ENCODE measurements at regions of chr9 and their contacts with region 1.

Region 1: GRCh38 chr9:129383561-129384416 is 205.7 kb upstream of the IER5L start:
- DNase-seq: peak; percentile 92 to 93 (median 92)
- H3K4me3 ChIP-seq: peak overlapping the region; percentile 41 to 79 (median 59)
- H3K4me3 Mint-ChIP-seq: peak overlapping the region; percentile 76 to 88
- H3K27ac ChIP-seq: peak overlapping the region; percentile 91 to 96
- H3K27ac Mint-ChIP-seq: peak overlapping the region; percentile 97 to 99 (median 97)
- H3K4me1 ChIP-seq: peaks cover 26 to 38% of the 10 kb centered on the region in 2 donors
- H3K4me1 Mint-ChIP-seq: peaks cover 35% of the 10 kb centered on the region
- H3K27me3 ChIP-seq: no peaks in the 10 kb centered on the region
- H3K27me3 Mint-ChIP-seq: peaks cover 2% of the 10 kb centered on the region in 3 donors
- CTCF ChIP-seq: peak; percentile 26

Region 2: GRCh38 chr9:129317179-129318011 is 66.4 kb before region 1 on chr9:
- intact Hi-C with region 1: no loop called
- DNase-seq: peak; percentile 34 to 50 (median 40)
- H3K4me3 ChIP-seq: no peak overlapping the region
- H3K4me3 Mint-ChIP-seq: no peak overlapping the region
- H3K27ac ChIP-seq: no peak overlapping the region
- H3K27ac Mint-ChIP-seq: peak overlapping the region in 2 of 7 donors; percentile 11 to 72
- H3K4me1 ChIP-seq: peaks cover 34 to 53% of the 10 kb centered on the region in 2 donors
- H3K4me1 Mint-ChIP-seq: peaks cover 46% of the 10 kb centered on the region
- H3K27me3 ChIP-seq: no peaks in the 10 kb centered on the region
- H3K27me3 Mint-ChIP-seq: peaks cover 0 to 3% (median 3%) of the 10 kb centered on the region in 3 donors
- CTCF ChIP-seq: no peak

Region 3: GRCh38 chr9:129328377-129329028 is 55.3 kb before region 1 on chr9:
- intact Hi-C with region 1: loop called in 1 of 2 experiments (anchors 5 kb)
- DNase-seq: no peak
- H3K4me3 ChIP-seq: no peak overlapping the region
- H3K4me3 Mint-ChIP-seq: no peak overlapping the region
- H3K27ac ChIP-seq: no peak overlapping the region
- H3K27ac Mint-ChIP-seq: peak overlapping the region in 1 of 7 donors; percentile 59
- H3K4me1 ChIP-seq: peaks cover 25 to 34% of the 10 kb centered on the region in 2 donors
- H3K4me1 Mint-ChIP-seq: peaks cover 38% of the 10 kb centered on the region
- H3K27me3 ChIP-seq: no peaks in the 10 kb centered on the region
- H3K27me3 Mint-ChIP-seq: peaks cover 0 to 4% (median 2%) of the 10 kb centered on the region in 3 donors
- CTCF ChIP-seq: no peak

Region 4: GRCh38 chr9:129413537-129414376 is 30.0 kb after region 1 on chr9:
- intact Hi-C with region 1: loop called in 1 of 2 experiments (anchors 2 kb)
- DNase-seq: peak; percentile 98
- H3K4me3 ChIP-seq: peak overlapping the region; percentile 31 to 68 (median 49)
- H3K4me3 Mint-ChIP-seq: peak overlapping the region; percentile 74 to 87
- H3K27ac ChIP-seq: peak overlapping the region; percentile 98
- H3K27ac Mint-ChIP-seq: peak overlapping the region; percentile 97 to 99 (median 98)
- H3K4me1 ChIP-seq: peaks cover 48 to 49% of the 10 kb centered on the region in 2 donors
- H3K4me1 Mint-ChIP-seq: peaks cover 38% of the 10 kb centered on the region
- H3K27me3 ChIP-seq: no peaks in the 10 kb centered on the region
- H3K27me3 Mint-ChIP-seq: peaks cover 1 to 2% (median 2%) of the 10 kb centered on the region in 3 donors
- CTCF ChIP-seq: no peak

Region 5: DNA sequence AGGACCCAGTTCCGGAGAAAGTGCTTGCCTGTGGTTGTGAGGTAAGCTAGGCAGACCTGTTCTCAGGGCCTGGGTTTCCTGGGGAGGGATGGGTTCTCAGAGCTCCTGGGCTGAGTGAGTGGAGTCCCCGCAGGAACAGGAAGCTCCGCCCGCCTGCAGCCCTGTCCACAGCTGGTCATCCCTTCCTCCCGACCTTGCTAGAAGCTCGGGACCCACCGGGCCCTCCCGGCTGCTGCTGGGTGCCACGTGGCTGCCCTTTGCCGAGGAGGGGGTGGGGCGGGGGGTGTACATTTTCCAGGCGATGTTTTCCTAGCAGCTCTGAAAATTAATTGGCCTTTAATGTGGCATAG is 39.0 kb after region 1 on chr9:
- intact Hi-C with region 1: loop called in 1 of 2 experiments (anchors 5 kb)
- DNase-seq: peak; percentile 44 to 59 (median 54)
- H3K4me3 ChIP-seq: peak overlapping the region in 1 of 3 experiments; percentile 14
- H3K4me3 Mint-ChIP-seq: no peak overlapping the region
- H3K27ac ChIP-seq: no peak overlapping the region
- H3K27ac Mint-ChIP-seq: peak overlapping the region in 1 of 7 donors; percentile 90
- H3K4me1 ChIP-seq: peaks cover 12% of the 10 kb centered on the region in 2 donors
- H3K4me1 Mint-ChIP-seq: peaks cover 16% of the 10 kb centered on the region
- H3K27me3 ChIP-seq: no peaks in the 10 kb centered on the region
- H3K27me3 Mint-ChIP-seq: peaks cover 1 to 9% (median 4%) of the 10 kb centered on the region in 3 donors
- CTCF ChIP-seq: no peak

Region 6: DNA sequence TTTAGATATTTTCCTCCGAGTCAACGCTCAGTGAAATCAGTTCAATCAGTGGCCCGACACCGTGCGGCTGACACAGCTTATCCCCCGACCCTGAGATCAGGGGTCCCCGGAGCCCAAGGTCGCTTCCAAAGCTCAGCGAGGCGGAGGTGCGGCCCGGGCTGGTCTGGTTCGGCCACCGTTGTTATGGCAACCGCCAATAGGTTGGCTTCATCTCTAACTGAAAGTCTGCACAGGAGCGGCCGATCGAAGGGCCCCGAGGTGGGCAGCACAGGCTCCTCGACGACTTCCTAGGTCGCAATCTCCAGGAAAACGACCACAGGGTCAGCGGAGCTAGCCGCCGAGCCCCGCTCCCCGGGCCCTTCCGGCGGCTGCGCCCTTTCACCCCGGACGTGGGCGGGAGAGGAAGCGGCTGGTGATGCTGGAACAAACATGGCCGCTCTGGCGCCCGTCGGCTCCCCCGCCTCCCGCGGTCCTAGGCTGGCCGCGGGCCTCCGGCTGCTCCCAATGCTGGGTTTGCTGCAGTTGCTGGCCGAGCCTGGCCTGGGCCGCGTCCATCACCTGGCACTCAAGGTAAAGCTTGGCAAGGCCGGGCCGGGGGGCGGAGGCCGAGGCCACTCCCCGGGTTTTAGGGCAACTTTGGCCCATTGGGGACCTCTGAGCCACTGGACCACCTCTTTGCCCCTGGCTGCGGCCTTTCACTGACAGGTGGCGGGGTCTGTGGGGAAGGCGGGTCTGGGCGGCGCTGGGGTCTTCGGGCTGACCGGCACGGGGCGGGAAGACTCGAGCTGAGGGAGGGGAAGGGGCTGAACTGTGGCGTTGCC is 669.9 kb after region 1 on chr9 and contains the start of gene GPR107:
- intact Hi-C with region 1: no loop called
- DNase-seq: peak; percentile 59 to 73 (median 71)
- H3K4me3 ChIP-seq: peak within 1 kb of the TSS; percentile 63 to 97 (median 86)
- H3K4me3 Mint-ChIP-seq: peak within 1 kb of the TSS; percentile 88 to 93
- H3K27ac ChIP-seq: peak within 1 kb of the TSS; percentile 55 to 91
- H3K27ac Mint-ChIP-seq: peak within 1 kb of the TSS; percentile 87 to 95 (median 94)
- H3K4me1 ChIP-seq: peaks cover 30 to 39% of the 10 kb centered on the region in 2 donors
- H3K4me1 Mint-ChIP-seq: peaks cover 31% of the 10 kb centered on the region
- H3K27me3 ChIP-seq: no peaks in the 10 kb centered on the region
- H3K27me3 Mint-ChIP-seq: no peaks in the 10 kb centered on the region
- CTCF ChIP-seq: no peak
- polyA plus RNA-seq, gene GPR107: 6.0 to 22.6 (median 6.0) TPM

Measured in CD14-positive monocyte (primary cell).